Activated CD4-positive, alpha-beta T cell treated with anti-CD3 and anti-CD28 coated beads, Interleukin-2, amount 10 ng/mL, durations not matched to agents 24 days and 14 days (primary cell): ENCODE measurements at regions of chr3 and their contacts with region 1.

Region 1: GRCh38 chr3:105764378-105765307 is 104.2 kb downstream of the CBLB start:
- DNase-seq: peak; percentile 82
- H3K4me3 Mint-ChIP-seq: peak overlapping the region; percentile 61
- H3K27ac Mint-ChIP-seq: peak overlapping the region; percentile 95
- H3K4me1 Mint-ChIP-seq: peaks cover 57% of the 10 kb centered on the region
- H3K27me3 Mint-ChIP-seq: no peaks in the 10 kb centered on the region

Region 2: DNA sequence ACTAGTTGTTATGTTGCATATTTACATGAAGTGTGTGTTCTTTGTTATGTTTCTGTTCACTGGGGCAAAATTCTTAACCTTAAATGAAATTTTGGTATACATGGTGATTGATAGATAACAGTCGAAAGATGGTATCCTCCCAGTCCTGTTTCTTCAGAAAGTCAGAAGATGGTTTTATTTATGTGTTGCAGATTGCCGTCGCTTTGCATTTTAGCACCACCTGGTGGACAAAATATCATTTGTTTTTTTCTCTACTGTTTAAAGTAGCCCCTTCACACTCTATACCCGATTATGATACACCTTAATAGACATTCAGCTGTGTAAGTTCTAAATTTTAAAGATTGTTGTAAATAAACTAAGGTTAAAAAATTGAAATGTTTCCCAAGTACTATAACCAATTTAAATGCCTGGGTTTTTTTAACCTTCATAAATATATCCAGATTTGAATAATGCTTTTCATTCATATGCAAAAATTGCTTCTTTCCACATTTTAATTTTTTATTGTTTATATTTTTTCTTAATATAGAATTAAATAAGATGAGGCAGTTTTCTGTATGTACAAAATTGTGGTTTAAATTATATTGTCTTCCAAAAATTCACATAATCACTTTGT is 245.7 kb before region 1 on chr3:
- intact Hi-C with region 1: no loop called
- DNase-seq: peak; percentile 75
- H3K4me3 Mint-ChIP-seq: no peak overlapping the region
- H3K27ac Mint-ChIP-seq: no peak overlapping the region
- H3K4me1 Mint-ChIP-seq: peaks cover 3% of the 10 kb centered on the region
- H3K27me3 Mint-ChIP-seq: no peaks in the 10 kb centered on the region

Region 3: GRCh38 chr3:105729667-105730066 is 35.0 kb before region 1 on chr3:
- intact Hi-C with region 1: no loop called
- DNase-seq: no peak
- H3K4me3 Mint-ChIP-seq: no peak overlapping the region
- H3K27ac Mint-ChIP-seq: no peak overlapping the region
- H3K4me1 Mint-ChIP-seq: peaks cover 10% of the 10 kb centered on the region
- H3K27me3 Mint-ChIP-seq: no peaks in the 10 kb centered on the region

Region 4: DNA sequence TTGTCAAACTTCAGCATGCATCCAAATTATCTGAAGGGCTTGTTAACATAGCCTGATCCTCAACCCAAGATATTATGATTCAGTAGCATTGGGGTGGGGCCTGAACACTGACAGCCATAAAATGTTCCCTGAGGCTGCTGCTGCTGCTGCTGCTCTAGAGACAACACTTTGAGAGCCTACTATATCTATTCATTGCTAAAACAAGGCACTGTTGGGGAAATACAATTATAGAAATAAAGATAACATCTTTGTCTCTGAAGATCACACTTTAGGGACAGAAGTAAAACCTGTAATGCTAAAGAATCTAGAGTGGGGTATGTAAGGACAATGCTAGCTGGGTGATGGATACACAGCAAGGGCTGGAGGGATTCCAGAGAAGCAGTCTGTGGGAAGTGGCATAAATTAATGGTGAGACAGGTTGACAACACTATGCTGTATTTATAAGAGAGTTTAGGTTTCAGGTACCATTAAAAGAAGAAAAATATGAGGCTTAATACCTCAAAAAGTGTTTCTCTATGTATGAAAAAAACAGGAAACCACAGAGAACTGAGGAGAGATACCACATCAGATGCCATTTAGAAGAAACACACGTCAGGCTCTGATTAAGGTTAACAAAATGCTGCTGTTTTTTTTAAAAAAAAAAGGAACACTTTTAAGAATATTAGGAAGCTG is 11.8 kb before region 1 on chr3:
- intact Hi-C with region 1: loop called (anchors 1 kb)
- DNase-seq: peak; percentile 83
- H3K4me3 Mint-ChIP-seq: peak overlapping the region; percentile 64
- H3K27ac Mint-ChIP-seq: peak overlapping the region; percentile 95
- H3K4me1 Mint-ChIP-seq: peaks cover 67% of the 10 kb centered on the region
- H3K27me3 Mint-ChIP-seq: no peaks in the 10 kb centered on the region

Region 5: GRCh38 chr3:105812194-105812586 is 47.5 kb after region 1 on chr3:
- intact Hi-C with region 1: no loop called
- DNase-seq: no peak
- H3K4me3 Mint-ChIP-seq: no peak overlapping the region
- H3K27ac Mint-ChIP-seq: peak overlapping the region; percentile 64
- H3K4me1 Mint-ChIP-seq: peaks cover 43% of the 10 kb centered on the region
- H3K27me3 Mint-ChIP-seq: no peaks in the 10 kb centered on the region